ENCODE measurements at regions of chr11 and their contacts with region 1.

Region 1: GRCh38 chr11:74237541-74237940 is 66.5 kb downstream of the PPME1 start:
- DNase-seq: no peak
- ATAC-seq: no peak
- H3K4me3 Mint-ChIP-seq: no peak overlapping the region
- H3K27ac Mint-ChIP-seq: no peak overlapping the region
- H3K4me1 Mint-ChIP-seq: no peaks in the 10 kb centered on the region
- H3K27me3 Mint-ChIP-seq: no peaks in the 10 kb centered on the region
- CTCF ChIP-seq: no peak

Region 2: DNA sequence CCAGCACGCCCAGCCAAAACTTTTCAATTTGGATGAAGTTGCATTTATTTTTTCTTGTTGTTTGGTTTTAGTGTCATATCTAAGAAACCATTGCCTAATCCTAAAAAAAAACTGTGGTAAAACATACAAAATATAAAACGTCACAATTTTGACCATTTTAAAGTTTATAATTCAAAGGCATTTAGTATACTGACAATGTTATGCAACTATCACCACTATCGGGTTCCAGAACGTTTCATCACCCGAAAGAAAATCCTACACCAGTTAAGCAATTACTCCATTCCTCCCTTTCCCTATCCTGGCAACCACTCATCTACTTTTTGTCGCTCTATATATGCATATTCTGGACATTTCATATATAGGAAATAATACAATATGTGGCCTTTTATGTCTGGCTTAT is 1963.1 kb before region 1 on chr11:
- CTCF ChIA-PET with region 1: no interaction called
- POLR2A ChIA-PET with region 1: interaction called, 10 read pairs
- DNase-seq: no peak
- ATAC-seq: no peak
- H3K4me3 Mint-ChIP-seq: no peak overlapping the region
- H3K27ac Mint-ChIP-seq: no peak overlapping the region
- H3K4me1 Mint-ChIP-seq: peaks cover 4% of the 10 kb centered on the region; the same call in 1 of the 2 replicates
- H3K27me3 Mint-ChIP-seq: no peaks in the 10 kb centered on the region
- CTCF ChIP-seq: no peak

Region 3: GRCh38 chr11:74069147-74070047 is 168.1 kb before region 1 on chr11:
- CTCF ChIA-PET with region 1: no interaction called
- POLR2A ChIA-PET with region 1: no interaction called
- DNase-seq: no peak
- ATAC-seq: no peak
- H3K4me3 Mint-ChIP-seq: no peak overlapping the region
- H3K27ac Mint-ChIP-seq: no peak overlapping the region
- H3K4me1 Mint-ChIP-seq: no peaks in the 10 kb centered on the region
- H3K27me3 Mint-ChIP-seq: no peaks in the 10 kb centered on the region
- CTCF ChIP-seq: no peak

Region 4: GRCh38 chr11:74341921-74342320 is 104.4 kb after region 1 on chr11:
- CTCF ChIA-PET with region 1: no interaction called
- POLR2A ChIA-PET with region 1: no interaction called
- DNase-seq: no peak
- ATAC-seq: no peak
- H3K4me3 Mint-ChIP-seq: no peak overlapping the region
- H3K27ac Mint-ChIP-seq: no peak overlapping the region
- H3K4me1 Mint-ChIP-seq: no peaks in the 10 kb centered on the region
- H3K27me3 Mint-ChIP-seq: no peaks in the 10 kb centered on the region
- CTCF ChIP-seq: no peak